ENCODE measurements at regions of chr7 and their contacts with region 1.

Region 1: DNA sequence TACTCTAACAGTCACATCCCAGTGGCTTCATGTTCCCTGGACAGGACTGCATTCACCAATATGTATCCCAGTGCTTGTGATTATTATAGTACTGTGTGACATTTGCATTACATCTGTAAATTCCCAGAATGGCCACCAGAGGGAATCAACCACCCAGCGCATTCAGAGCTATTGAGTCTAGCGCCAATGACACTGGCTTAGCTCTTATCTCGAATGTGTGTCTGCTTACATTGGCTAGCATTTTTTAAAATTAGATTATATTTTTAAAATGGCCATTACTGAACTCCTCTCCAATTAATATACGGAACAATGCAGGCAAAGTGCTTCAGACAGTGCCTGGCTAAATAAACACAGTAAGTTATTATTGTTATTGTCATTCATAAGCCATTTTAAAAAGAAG is 36.3 kb downstream of the TRIL start:
- DNase-seq: no peak
- H3K4me3 ChIP-seq: no peak overlapping the region
- H3K27ac ChIP-seq: no peak overlapping the region
- H3K4me1 ChIP-seq: peaks cover 8 to 27% (median 23%) of the 10 kb centered on the region in 6 donors
- H3K27me3 ChIP-seq: no peaks in the 10 kb centered on the region
- CTCF ChIP-seq: peak; percentile 47 to 87 (median 76)
- POLR2A ChIP-seq: no peak

Region 2: GRCh38 chr7:28955718-28956619 is 34.1 kb after region 1 on chr7:
- intact Hi-C with region 1: loop called (anchors 5 kb)
- DNase-seq: peak; percentile 90
- H3K4me3 ChIP-seq: peak overlapping the region; percentile 23 to 77 (median 48)
- H3K27ac ChIP-seq: peak overlapping the region; percentile 72 to 89 (median 86)
- H3K4me1 ChIP-seq: peaks cover 16 to 69% (median 47%) of the 10 kb centered on the region in 6 donors
- H3K27me3 ChIP-seq: peaks cover 10 to 67% (median 39%) of the 10 kb centered on the region in 7 donors
- CTCF ChIP-seq: peak; percentile 29 to 84 (median 65)
- POLR2A ChIP-seq: no peak

Region 3: GRCh38 chr7:30028193-30028748 is 1106.4 kb after region 1 on chr7 and contains the start of gene PLEKHA8:
- intact Hi-C with region 1: no loop called
- DNase-seq: peak; percentile 97
- H3K4me3 ChIP-seq: peak within 1 kb of the TSS; percentile 86 to 99 (median 94)
- H3K27ac ChIP-seq: peak within 1 kb of the TSS; percentile 58 to 91 (median 84)
- H3K4me1 ChIP-seq: peaks cover 27 to 62% (median 37%) of the 10 kb centered on the region in 6 donors
- H3K27me3 ChIP-seq: no peaks in the 10 kb centered on the region
- CTCF ChIP-seq: peak in 1 of 11 experiments; percentile 6
- POLR2A ChIP-seq: peak in 1 of 3 donors; percentile 52
- total RNA-seq, gene PLEKHA8: 5.2 to 13.6 (median 9.6) TPM

Measured in spleen (tissue), 13 donors.